Activated CD4-positive, alpha-beta T cell treated with anti-CD3 and anti-CD28 coated beads, Interleukin-2, amount 10 ng/mL, durations not matched to agents 24 days and 14 days (primary cell): ENCODE measurements at regions of chr16 and their contacts with region 1.

Region 1: DNA sequence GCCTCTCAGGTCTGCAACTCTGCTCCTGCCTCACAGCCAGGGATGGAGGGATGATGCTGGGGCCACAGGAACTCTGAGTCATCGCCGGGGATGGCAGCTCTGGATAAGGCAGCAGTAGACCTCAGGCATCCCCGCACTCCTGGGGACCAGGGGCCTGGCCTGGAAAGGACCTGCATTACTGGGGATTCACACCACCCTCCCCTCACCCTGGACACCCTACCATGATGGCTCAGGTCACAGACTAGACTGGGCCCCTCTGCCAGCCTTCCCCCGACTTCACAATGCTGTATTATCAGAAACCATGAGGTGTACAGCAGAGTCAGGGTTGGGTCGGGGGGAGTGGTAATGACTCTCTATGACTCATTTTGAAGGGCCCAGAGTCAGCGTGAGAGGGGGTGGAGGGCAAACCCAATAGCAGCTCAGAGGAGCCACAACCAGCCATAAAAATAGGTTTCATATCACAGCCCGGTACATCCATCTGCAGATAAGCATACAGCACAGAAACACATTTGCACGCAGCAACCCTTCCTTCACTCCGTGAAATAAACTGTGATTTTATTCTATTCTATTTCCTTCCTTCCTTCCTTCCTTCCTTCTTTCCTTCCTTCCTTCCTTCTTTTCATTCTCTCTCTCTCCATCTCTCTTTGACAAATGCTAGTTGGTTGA is 28.8 kb downstream of the DYNLRB2 start:
- DNase-seq: peak; percentile 89
- H3K4me3 Mint-ChIP-seq: peak overlapping the region; percentile 43
- H3K27ac Mint-ChIP-seq: peak overlapping the region; percentile 81
- H3K4me1 Mint-ChIP-seq: peaks cover 45% of the 10 kb centered on the region
- H3K27me3 Mint-ChIP-seq: no peaks in the 10 kb centered on the region

Region 2: GRCh38 chr16:80387318-80387921 is 182.2 kb before region 1 on chr16:
- intact Hi-C with region 1: no loop called
- DNase-seq: no peak
- H3K4me3 Mint-ChIP-seq: no peak overlapping the region
- H3K27ac Mint-ChIP-seq: no peak overlapping the region
- H3K4me1 Mint-ChIP-seq: no peaks in the 10 kb centered on the region
- H3K27me3 Mint-ChIP-seq: no peaks in the 10 kb centered on the region

Region 3: DNA sequence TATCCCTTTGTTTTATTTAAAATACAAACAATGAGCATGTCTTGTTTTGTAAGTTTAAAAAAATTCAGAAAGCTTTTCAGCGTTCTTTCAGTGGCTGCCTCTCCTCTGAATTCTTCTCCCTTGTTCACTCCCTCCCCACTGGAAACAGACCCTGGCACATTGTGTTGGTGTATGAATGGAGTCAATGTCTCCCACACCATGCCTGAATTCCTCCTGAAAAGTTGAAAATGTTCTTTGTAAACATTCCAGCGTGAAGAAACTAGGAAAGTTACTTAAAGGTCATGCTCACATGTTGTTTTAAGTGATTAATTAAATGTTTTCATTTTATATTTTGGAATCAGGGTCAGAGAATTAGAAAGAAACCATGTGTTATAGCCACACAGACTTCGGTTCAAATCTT is 165.7 kb before region 1 on chr16:
- intact Hi-C with region 1: no loop called
- DNase-seq: no peak
- H3K4me3 Mint-ChIP-seq: no peak overlapping the region
- H3K27ac Mint-ChIP-seq: no peak overlapping the region
- H3K4me1 Mint-ChIP-seq: no peaks in the 10 kb centered on the region
- H3K27me3 Mint-ChIP-seq: peaks cover 7% of the 10 kb centered on the region

Region 4: DNA sequence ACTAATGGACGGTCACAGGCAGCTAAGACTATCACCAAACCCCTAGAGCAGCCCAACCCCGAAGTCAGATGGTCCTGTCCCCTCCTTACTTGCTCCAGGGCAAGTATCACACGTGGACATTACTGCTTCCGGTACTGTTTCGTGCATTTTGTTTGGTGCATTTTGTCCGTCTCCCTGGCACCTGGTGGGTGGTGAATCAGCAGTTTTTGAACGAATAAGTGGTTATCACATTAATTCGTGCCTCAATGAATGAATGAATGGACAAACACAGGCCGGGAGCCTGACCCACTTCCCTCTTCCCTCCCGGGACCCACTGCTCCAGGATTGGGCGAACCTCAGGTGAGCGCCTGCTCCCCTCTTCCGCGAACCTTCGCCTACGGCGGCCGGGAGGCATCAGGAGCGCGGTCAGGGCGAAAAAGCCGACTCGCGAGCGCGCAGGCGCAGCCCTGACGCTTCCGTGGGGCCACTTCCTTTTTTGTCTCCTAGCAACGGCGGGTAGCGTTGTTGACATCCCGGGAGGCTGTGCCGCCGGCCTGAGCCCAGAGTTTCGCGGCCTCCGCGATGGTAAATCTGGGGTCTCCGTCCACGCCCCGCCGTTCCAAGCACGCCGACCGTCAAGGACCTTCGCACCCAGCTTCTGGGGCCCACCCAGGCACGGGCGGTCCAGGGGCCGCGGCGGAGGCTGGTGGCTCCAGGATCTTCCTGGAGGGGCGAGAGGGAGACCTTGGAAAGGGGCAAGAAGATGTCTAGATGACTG is 28.9 kb before region 1 on chr16 and contains the start of gene DYNLRB2:
- intact Hi-C with region 1: loop called (anchors 1 kb)
- DNase-seq: peak; percentile 98
- H3K4me3 Mint-ChIP-seq: peak within 1 kb of the TSS; percentile 96
- H3K27ac Mint-ChIP-seq: peak within 1 kb of the TSS; percentile 98
- H3K4me1 Mint-ChIP-seq: peaks cover 32% of the 10 kb centered on the region
- H3K27me3 Mint-ChIP-seq: peaks cover 9% of the 10 kb centered on the region
- total RNA-seq, gene DYNLRB2: not detected in 2 replicates

Region 5: DNA sequence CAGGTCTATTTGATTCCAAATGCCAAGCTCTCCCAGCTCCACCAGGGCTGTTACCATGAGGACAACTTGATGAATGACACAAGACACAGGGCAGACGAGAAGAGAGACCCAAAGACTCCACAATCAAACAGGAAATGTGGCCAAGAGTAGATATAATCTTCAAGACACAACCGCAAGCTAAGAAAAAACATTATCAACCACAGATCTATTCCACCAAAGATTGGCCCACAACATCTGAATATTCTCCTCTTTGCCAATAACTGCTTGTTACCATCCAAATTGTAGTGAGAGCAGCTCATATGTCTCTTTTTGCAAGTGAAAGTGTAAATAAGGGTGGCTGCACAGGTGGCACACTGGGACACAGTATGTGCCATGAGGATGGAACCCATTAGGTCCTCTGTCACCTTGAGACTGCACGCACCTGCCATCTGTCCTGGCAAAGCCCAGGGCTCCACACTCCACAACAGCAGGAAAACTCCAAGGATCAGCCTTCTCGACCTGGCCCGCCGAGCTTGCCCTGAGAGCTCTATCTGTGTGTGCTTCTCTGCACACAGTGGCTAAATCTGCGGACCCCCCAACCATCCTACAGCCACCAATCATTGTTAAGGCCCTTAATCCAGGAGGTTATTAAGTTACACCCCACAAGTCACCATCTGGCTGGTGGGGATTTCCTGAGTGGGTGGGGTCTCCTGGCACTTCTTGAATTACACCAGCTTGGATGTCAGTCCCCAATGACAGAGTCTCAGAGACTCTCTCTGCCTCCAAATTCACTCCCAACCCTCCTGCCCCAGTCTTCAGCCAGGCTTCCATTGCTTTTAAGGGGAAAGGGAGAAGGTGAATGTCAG is 21.7 kb after region 1 on chr16:
- intact Hi-C with region 1: loop called (anchors 1 kb)
- DNase-seq: peak; percentile 88
- H3K4me3 Mint-ChIP-seq: peak overlapping the region; percentile 67
- H3K27ac Mint-ChIP-seq: peak overlapping the region; percentile 72
- H3K4me1 Mint-ChIP-seq: peaks cover 41% of the 10 kb centered on the region
- H3K27me3 Mint-ChIP-seq: peaks cover 6% of the 10 kb centered on the region